ENCODE measurements at regions of chr6 and their contacts with region 1.

Region 1: DNA sequence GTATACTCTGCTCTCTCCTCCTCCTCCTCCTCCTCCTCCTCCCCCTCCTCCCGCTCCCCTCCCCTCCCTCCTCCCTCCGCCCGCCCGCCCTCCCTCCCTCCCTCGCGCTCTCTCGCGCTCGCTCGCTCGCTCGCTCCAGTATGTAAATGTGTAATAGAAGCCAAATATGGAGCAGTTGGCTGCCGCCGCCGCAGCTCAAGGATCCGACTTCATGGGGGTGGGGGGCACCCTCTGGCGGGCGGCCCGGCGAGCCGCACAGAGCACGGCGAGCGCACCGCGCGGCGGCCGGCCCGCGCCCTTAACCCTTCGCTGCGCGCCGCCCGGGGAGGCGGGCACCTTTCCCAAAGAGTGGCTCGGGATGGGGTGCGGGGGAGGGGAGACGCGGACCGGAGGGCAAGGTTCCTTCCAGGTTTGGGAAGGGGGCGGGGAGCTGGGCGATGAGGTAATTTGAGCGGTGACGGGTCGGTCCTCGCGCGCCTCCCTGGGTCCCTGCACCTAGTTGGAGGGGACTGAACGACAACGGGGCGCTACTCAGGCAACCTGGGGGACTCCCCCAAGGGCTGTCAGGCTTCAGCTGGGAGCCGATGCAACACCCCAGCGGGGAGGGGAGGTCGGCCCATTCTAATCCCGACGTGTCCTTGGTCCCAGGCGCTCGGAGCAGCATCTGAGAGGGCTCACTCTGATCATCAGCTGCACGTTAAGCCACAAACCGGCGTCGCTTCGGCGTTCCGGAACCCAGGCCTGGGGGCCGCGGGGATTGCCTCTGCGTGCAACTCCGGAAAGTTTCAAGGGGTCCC is 409 bp upstream of the ATXN1 start:
- DNase-seq: peak; percentile 93 to 96
- ATAC-seq: peak; percentile 77
- H3K4me3 ChIP-seq: peak overlapping the region; percentile 93 to 99
- H3K27ac ChIP-seq: peak overlapping the region; percentile 62 to 98
- H3K4me1 ChIP-seq: no peaks in the 10 kb centered on the region
- H3K27me3 ChIP-seq: no peaks in the 10 kb centered on the region

Region 2: GRCh38 chr6:16332175-16332542 is 429.5 kb before region 1 on chr6:
- intact Hi-C with region 1: loop called (anchors 5 kb)
- DNase-seq: peak; percentile 77 to 85
- ATAC-seq: peak; percentile 89
- H3K4me3 ChIP-seq: no peak overlapping the region
- H3K27ac ChIP-seq: no peak overlapping the region
- H3K4me1 ChIP-seq: no peaks in the 10 kb centered on the region
- H3K27me3 ChIP-seq: no peaks in the 10 kb centered on the region

Region 3: DNA sequence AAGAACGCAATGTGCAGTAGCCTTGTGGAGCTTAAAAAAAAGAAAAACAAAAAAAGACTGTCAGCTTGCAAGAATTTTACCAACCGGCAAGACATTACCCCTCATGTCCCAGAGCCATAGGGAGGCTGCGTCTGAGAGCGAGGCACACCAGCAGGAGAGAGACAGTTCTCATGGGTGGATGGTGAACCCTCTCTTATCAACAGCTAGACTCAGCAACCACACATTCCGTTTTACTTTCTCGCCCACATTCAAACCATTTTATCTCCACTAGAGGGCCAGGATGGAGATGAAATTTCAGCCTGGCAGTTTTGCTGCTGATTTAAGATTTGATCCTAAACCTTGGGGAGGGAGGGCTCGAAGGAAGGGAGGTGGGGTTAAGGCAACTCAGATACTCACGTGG is 247.4 kb before region 1 on chr6:
- intact Hi-C with region 1: loop called in 1 of 2 experiments (anchors 5 kb)
- DNase-seq: no peak
- ATAC-seq: peak; percentile 43
- H3K4me3 ChIP-seq: no peak overlapping the region
- H3K27ac ChIP-seq: no peak overlapping the region
- H3K4me1 ChIP-seq: peaks cover 7 to 11% of the 10 kb centered on the region in 2 donors
- H3K27me3 ChIP-seq: no peaks in the 10 kb centered on the region

Region 4: DNA sequence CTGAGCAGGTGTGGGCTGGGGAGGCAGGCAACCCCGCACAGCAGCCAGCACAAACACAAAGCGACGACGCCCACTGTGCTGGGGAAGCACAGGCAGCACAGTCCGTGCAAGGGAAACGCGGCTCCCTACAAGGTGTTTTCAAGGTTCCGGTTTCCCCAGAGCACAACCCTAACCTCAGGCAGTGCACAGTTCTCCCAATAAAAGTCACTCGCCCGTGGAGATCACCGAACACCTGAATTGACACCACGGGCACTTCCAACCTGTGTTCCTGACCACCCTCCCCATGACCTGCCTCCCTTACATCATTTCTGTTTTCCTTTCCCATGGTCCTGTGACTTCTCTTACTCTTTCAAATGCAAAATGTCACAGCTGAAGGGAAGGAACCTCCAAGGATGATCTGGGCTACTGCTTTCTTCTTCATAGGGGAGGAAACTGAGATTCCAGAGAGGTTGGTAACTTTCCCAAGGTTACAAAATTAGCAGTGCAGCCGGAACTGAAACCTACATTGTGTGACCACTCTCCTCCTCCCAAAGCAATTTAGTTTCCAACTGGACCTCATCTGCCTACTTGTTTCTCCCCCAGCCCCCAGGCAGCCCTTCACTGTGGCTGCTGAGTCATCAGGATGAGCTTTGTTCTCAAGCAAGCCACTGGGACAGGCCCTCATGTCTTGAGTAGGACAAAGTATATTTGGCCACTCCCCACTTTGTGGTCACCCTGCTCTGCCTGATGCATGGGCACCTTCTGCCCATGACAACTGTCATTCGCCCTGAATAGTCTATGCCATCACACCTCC is 125.7 kb before region 1 on chr6:
- intact Hi-C with region 1: loop called in 1 of 2 experiments (anchors 10 kb)
- DNase-seq: no peak
- ATAC-seq: no peak
- H3K4me3 ChIP-seq: no peak overlapping the region
- H3K27ac ChIP-seq: no peak overlapping the region
- H3K4me1 ChIP-seq: peaks cover 0 to 5% of the 10 kb centered on the region in 2 donors
- H3K27me3 ChIP-seq: no peaks in the 10 kb centered on the region

Region 5: DNA sequence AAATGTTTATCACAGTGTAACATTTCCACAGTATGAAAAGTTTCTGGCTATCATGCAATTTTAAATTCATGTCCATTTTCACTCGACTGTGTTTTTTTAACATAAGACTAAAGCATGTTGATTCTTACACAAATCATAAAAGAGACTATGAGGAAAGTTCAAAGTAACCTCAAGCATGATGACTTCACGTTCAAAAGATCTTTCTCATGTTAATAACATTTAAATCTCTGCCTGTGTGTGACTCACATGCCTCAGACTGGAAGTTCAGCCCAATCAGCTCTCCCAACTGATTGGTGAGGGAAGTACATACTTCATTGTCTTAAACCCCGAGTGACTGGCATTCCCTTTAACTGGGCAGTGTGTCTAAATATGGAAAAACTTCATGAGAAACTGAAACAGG is 37.8 kb before region 1 on chr6:
- intact Hi-C with region 1: loop called (anchors 5 kb)
- DNase-seq: peak in 1 of 2 donors; percentile 44
- ATAC-seq: peak; percentile 79
- H3K4me3 ChIP-seq: no peak overlapping the region
- H3K27ac ChIP-seq: no peak overlapping the region
- H3K4me1 ChIP-seq: peaks cover 0 to 8% of the 10 kb centered on the region in 2 donors
- H3K27me3 ChIP-seq: no peaks in the 10 kb centered on the region

Region 6: GRCh38 chr6:17086469-17086868 is 324.8 kb after region 1 on chr6:
- intact Hi-C with region 1: loop called (anchors 10 kb)
- DNase-seq: no peak
- ATAC-seq: peak; percentile 69
- H3K4me3 ChIP-seq: no peak overlapping the region
- H3K27ac ChIP-seq: no peak overlapping the region
- H3K4me1 ChIP-seq: no peaks in the 10 kb centered on the region
- H3K27me3 ChIP-seq: no peaks in the 10 kb centered on the region

Region 7: GRCh38 chr6:17130786-17131185 is 369.1 kb after region 1 on chr6:
- intact Hi-C with region 1: no loop called
- DNase-seq: no peak
- ATAC-seq: no peak
- H3K4me3 ChIP-seq: no peak overlapping the region
- H3K27ac ChIP-seq: no peak overlapping the region
- H3K4me1 ChIP-seq: no peaks in the 10 kb centered on the region
- H3K27me3 ChIP-seq: no peaks in the 10 kb centered on the region

Measured in aorta (tissue), 5 donors.